Colonic mucosa (tissue), 4 donors: ENCODE measurements at regions of chr16 and their contacts with region 1.

Region 1: GRCh38 chr16:62907562-62907961 is 871.3 kb upstream of the CDH8 start:
- DNase-seq: no peak
- H3K4me3 ChIP-seq: no peak overlapping the region
- H3K27ac ChIP-seq: no peak overlapping the region
- H3K4me1 ChIP-seq: no peaks in the 10 kb centered on the region
- H3K27me3 ChIP-seq: no peaks in the 10 kb centered on the region
- CTCF ChIP-seq: no peak

Region 2: DNA sequence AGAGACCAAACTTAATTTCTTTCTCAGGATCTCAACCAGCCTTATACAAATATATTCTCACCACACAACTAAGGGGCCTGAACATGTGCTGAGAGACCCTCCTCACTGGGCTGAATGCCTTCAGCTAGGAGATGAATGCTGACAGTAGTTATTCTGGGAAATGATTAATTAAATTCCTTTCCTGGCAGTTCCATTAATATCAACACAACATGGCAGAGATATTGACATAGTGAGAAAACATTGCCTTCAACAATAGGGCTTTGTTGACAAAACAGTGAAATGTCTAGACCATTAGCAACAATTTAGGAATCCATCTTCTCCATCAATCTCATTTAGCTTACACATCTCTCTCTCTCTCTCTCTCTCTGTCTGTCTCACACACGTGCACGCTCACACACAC is 90.5 kb before region 1 on chr16:
- intact Hi-C with region 1: no loop called
- DNase-seq: no peak
- H3K4me3 ChIP-seq: no peak overlapping the region
- H3K27ac ChIP-seq: no peak overlapping the region
- H3K4me1 ChIP-seq: no peaks in the 10 kb centered on the region
- H3K27me3 ChIP-seq: no peaks in the 10 kb centered on the region
- CTCF ChIP-seq: no peak

Region 3: GRCh38 chr16:62921904-62922303 is 14.3 kb after region 1 on chr16:
- intact Hi-C with region 1: loop called (anchors 2 kb)
- DNase-seq: no peak
- H3K4me3 ChIP-seq: no peak overlapping the region
- H3K27ac ChIP-seq: no peak overlapping the region
- H3K4me1 ChIP-seq: no peaks in the 10 kb centered on the region
- H3K27me3 ChIP-seq: no peaks in the 10 kb centered on the region
- CTCF ChIP-seq: no peak